ENCODE measurements at regions of chr1 and their contacts with region 1.

Region 1: GRCh38 chr1:11473491-11474034 is 5.4 kb upstream of the DISP3 start:
- DNase-seq: no peak

Region 2: GRCh38 chr1:9960706-9961562 is 1512.6 kb before region 1 on chr1:
- intact Hi-C with region 1: loop called in 1 of 2 experiments (anchors 5 kb)
- DNase-seq: no peak

Region 3: GRCh38 chr1:11078631-11079030 is 394.9 kb before region 1 on chr1:
- intact Hi-C with region 1: no loop called
- DNase-seq: no peak

Measured in posterior vena cava (tissue), 2 donors.